Mammary epithelial cell (primary cell): ENCODE measurements at regions of chr12 and their contacts with region 1.

Region 1: GRCh38 chr12:40622246-40622838 is 69.9 kb upstream of the CNTN1 start:
- DNase-seq: peak; percentile 46
- H3K4me3 ChIP-seq: no peak overlapping the region
- H3K27ac ChIP-seq: no peak overlapping the region
- H3K4me1 ChIP-seq: no peaks in the 10 kb centered on the region
- H3K27me3 ChIP-seq: no peaks in the 10 kb centered on the region
- CTCF ChIP-seq: peak; percentile 82 to 83

Region 2: GRCh38 chr12:40697566-40698259 is 75.4 kb after region 1 on chr12:
- CTCF ChIA-PET with region 1: interaction called, 15 read pairs
- dilution Hi-C with region 1: no loop called
- in situ Hi-C with region 1: no loop called
- intact Hi-C with region 1: loop called (anchors 5 kb)
- DNase-seq: peak; percentile 92
- H3K4me3 ChIP-seq: peak overlapping the region in 2 of 3 experiments; percentile 11 to 20
- H3K27ac ChIP-seq: no peak overlapping the region
- H3K4me1 ChIP-seq: peaks cover 19% of the 10 kb centered on the region
- H3K27me3 ChIP-seq: no peaks in the 10 kb centered on the region
- CTCF ChIP-seq: no peak

Region 3: DNA sequence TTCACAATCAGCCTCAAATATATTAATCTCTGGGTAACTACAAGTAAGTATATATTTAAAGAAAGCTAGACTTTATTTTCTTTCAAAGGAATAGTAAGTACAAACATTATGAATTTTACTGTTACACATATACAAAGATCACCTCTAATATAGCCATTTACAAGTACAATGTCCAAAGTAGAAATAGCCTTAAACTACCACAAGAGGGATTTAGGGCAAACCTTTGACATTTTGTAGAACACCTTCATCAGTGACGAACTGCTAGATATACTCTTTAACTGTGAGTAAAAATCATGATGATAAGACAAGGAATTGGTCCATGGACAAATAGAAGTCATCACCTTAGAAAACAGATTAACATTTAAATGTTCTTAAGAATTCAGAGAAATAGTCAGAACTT is 139.7 kb after region 1 on chr12:
- CTCF ChIA-PET with region 1: no interaction called
- dilution Hi-C with region 1: no loop called
- in situ Hi-C with region 1: no loop called
- intact Hi-C with region 1: loop called (anchors 5 kb)
- DNase-seq: no peak
- H3K4me3 ChIP-seq: no peak overlapping the region
- H3K27ac ChIP-seq: no peak overlapping the region
- H3K4me1 ChIP-seq: no peaks in the 10 kb centered on the region
- H3K27me3 ChIP-seq: no peaks in the 10 kb centered on the region
- CTCF ChIP-seq: peak; percentile 19 to 23

Region 4: GRCh38 chr12:40802656-40803055 is 180.3 kb after region 1 on chr12:
- CTCF ChIA-PET with region 1: no interaction called
- dilution Hi-C with region 1: no loop called
- in situ Hi-C with region 1: no loop called
- intact Hi-C with region 1: no loop called
- DNase-seq: no peak
- H3K4me3 ChIP-seq: no peak overlapping the region
- H3K27ac ChIP-seq: no peak overlapping the region
- H3K4me1 ChIP-seq: no peaks in the 10 kb centered on the region
- H3K27me3 ChIP-seq: no peaks in the 10 kb centered on the region
- CTCF ChIP-seq: no peak

Region 5: GRCh38 chr12:40970320-40970907 is 348.1 kb after region 1 on chr12:
- CTCF ChIA-PET with region 1: interaction called, 10 read pairs
- dilution Hi-C with region 1: no loop called
- in situ Hi-C with region 1: no loop called
- intact Hi-C with region 1: no loop called
- DNase-seq: no peak
- H3K4me3 ChIP-seq: no peak overlapping the region
- H3K27ac ChIP-seq: no peak overlapping the region
- H3K4me1 ChIP-seq: no peaks in the 10 kb centered on the region
- H3K27me3 ChIP-seq: no peaks in the 10 kb centered on the region
- CTCF ChIP-seq: peak in 1 of 2 donors; percentile 34